Panc1 (cell line): ENCODE measurements at regions of chrX and their contacts with region 1.

Region 1: GRCh38 chrX:10077425-10078188 is 79.2 kb upstream of the CLCN4 start:
- DNase-seq: no peak
- ATAC-seq: no peak
- H3K4me3 ChIP-seq: no peak overlapping the region
- H3K27ac ChIP-seq: no peak overlapping the region
- H3K4me1 ChIP-seq: no peaks in the 10 kb centered on the region
- H3K27me3 ChIP-seq: no peaks in the 10 kb centered on the region
- CTCF ChIP-seq: no peak

Region 2: DNA sequence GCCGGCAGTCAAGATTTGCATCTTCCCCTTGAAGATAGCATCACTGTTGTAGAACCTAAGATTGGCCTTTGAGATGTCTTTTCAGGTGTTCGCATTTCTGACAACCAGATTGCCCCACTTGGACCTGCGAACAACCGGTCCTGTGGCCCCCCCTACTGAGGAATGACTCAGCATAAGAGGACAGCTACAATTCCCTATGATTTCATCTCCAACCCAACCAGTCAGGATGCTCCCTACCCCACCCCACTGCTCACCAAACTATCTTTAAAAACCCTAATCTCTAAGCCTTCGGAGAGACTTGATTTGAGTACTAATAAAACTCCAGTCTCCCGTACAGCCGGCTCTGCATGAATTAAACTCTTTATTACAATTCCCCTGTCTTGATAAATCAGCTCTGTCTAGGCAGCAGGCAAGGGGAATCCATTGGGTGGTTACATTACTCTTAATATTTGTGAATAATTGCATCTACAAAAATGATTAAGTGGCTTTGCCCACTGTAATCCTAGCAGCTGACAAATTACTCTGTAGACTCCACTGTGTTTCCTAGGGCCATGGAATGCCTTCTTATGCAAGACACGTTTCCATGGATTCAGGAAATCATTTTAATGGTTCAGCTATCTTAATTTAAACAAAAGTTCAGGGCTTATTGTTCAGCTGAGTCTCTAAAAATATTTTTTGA is 407.3 kb before region 1 on chrX:
- CTCF ChIA-PET with region 1: interaction called, 10 read pairs
- POLR2A ChIA-PET with region 1: no interaction called
- in situ Hi-C with region 1: no loop called
- intact Hi-C with region 1: no loop called
- DNase-seq: no peak
- ATAC-seq: no peak
- H3K4me3 ChIP-seq: no peak overlapping the region
- H3K27ac ChIP-seq: no peak overlapping the region
- H3K4me1 ChIP-seq: no peaks in the 10 kb centered on the region
- H3K27me3 ChIP-seq: no peaks in the 10 kb centered on the region
- CTCF ChIP-seq: no peak

Region 3: GRCh38 chrX:10030570-10030969 is 47.0 kb before region 1 on chrX:
- CTCF ChIA-PET with region 1: no interaction called
- POLR2A ChIA-PET with region 1: no interaction called
- in situ Hi-C with region 1: no loop called
- intact Hi-C with region 1: no loop called
- DNase-seq: no peak
- ATAC-seq: peak; percentile 86
- H3K4me3 ChIP-seq: no peak overlapping the region
- H3K27ac ChIP-seq: no peak overlapping the region
- H3K4me1 ChIP-seq: no peaks in the 10 kb centered on the region
- H3K27me3 ChIP-seq: no peaks in the 10 kb centered on the region
- CTCF ChIP-seq: no peak